Calu3 (cell line): ENCODE measurements at regions of chr7 and their contacts with region 1.

Region 1: GRCh38 chr7:21427182-21427870 is 557 bp upstream of the SP4 start:
- DNase-seq: peak; percentile 100
- H3K4me3 Mint-ChIP-seq: peak overlapping the region; percentile 99
- H3K27ac Mint-ChIP-seq: peak overlapping the region; percentile 96
- H3K4me1 Mint-ChIP-seq: peaks cover 30% of the 10 kb centered on the region
- H3K27me3 Mint-ChIP-seq: no peaks in the 10 kb centered on the region
- CTCF ChIP-seq: no peak

Region 2: GRCh38 chr7:21276471-21277035 is 150.8 kb before region 1 on chr7:
- CTCF ChIA-PET with region 1: no interaction called
- intact Hi-C with region 1: no loop called
- DNase-seq: no peak
- H3K4me3 Mint-ChIP-seq: no peak overlapping the region
- H3K27ac Mint-ChIP-seq: no peak overlapping the region
- H3K4me1 Mint-ChIP-seq: no peaks in the 10 kb centered on the region
- H3K27me3 Mint-ChIP-seq: no peaks in the 10 kb centered on the region
- CTCF ChIP-seq: no peak

Region 3: GRCh38 chr7:21300692-21301091 is 126.6 kb before region 1 on chr7:
- CTCF ChIA-PET with region 1: interaction called, 4 read pairs
- intact Hi-C with region 1: loop called (anchors 2 kb)
- DNase-seq: peak; percentile 23
- H3K4me3 Mint-ChIP-seq: no peak overlapping the region
- H3K27ac Mint-ChIP-seq: no peak overlapping the region
- H3K4me1 Mint-ChIP-seq: peaks cover 15% of the 10 kb centered on the region
- H3K27me3 Mint-ChIP-seq: no peaks in the 10 kb centered on the region
- CTCF ChIP-seq: peak; percentile 51

Region 4: DNA sequence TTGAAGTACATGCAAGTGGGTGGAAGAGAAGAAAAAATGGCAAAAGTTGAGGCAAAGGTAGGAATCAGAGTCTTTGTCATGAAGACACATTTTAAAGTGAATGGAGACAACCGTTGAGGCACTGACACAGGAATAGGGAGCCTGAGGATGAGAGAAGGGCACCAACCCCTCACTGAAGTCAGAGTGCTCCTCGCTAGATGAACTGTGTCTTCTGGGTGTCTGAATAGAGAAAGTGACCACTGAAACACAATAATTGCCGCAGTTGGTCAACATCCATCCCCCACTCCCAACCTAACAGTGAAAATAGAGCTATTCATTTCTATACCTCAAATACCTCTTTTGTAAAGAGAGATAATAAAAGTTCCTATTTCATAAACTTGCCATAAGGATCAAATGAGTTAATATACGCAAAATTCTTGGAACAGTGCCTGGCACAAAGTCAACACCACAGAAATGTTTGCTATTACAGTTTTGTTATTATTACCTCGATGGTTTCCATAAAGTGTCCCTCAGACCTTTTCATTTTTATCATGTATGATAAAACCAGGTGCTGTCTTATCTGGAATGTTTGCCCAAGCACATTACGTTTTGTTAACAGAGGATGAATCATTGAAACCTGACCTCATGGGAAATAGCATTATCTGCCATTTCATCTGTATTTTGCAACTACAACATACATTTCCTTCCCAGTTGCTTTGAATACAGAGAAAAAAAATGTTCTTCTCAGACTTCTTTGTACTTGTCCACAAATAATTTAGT is 61.3 kb before region 1 on chr7:
- CTCF ChIA-PET with region 1: interaction called, 7 read pairs
- intact Hi-C with region 1: loop called (anchors 1 kb)
- DNase-seq: peak; percentile 69
- H3K4me3 Mint-ChIP-seq: peak overlapping the region; percentile 6
- H3K27ac Mint-ChIP-seq: peak overlapping the region; percentile 0
- H3K4me1 Mint-ChIP-seq: peaks cover 60% of the 10 kb centered on the region
- H3K27me3 Mint-ChIP-seq: no peaks in the 10 kb centered on the region
- CTCF ChIP-seq: no peak

Region 5: GRCh38 chr7:21507626-21508343 is 80.5 kb after region 1 on chr7:
- CTCF ChIA-PET with region 1: interaction called, 10 read pairs
- intact Hi-C with region 1: loop called (anchors 5 kb)
- DNase-seq: peak; percentile 80
- H3K4me3 Mint-ChIP-seq: no peak overlapping the region
- H3K27ac Mint-ChIP-seq: no peak overlapping the region
- H3K4me1 Mint-ChIP-seq: peaks cover 20% of the 10 kb centered on the region
- H3K27me3 Mint-ChIP-seq: no peaks in the 10 kb centered on the region
- CTCF ChIP-seq: peak; percentile 87

Region 6: GRCh38 chr7:21550826-21551544 is 123.7 kb after region 1 on chr7:
- CTCF ChIA-PET with region 1: no interaction called
- intact Hi-C with region 1: loop called (anchors 5 kb)
- DNase-seq: peak; percentile 80
- H3K4me3 Mint-ChIP-seq: peak overlapping the region; percentile 18
- H3K27ac Mint-ChIP-seq: peak overlapping the region; percentile 79
- H3K4me1 Mint-ChIP-seq: peaks cover 26% of the 10 kb centered on the region
- H3K27me3 Mint-ChIP-seq: no peaks in the 10 kb centered on the region
- CTCF ChIP-seq: no peak

Region 7: GRCh38 chr7:23072048-23072447 is 1644.7 kb after region 1 on chr7:
- CTCF ChIA-PET with region 1: no interaction called
- intact Hi-C with region 1: loop called (anchors 5 kb)
- DNase-seq: no peak
- H3K4me3 Mint-ChIP-seq: no peak overlapping the region
- H3K27ac Mint-ChIP-seq: no peak overlapping the region
- H3K4me1 Mint-ChIP-seq: peaks cover 27% of the 10 kb centered on the region
- H3K27me3 Mint-ChIP-seq: peaks cover 43% of the 10 kb centered on the region
- CTCF ChIP-seq: no peak